Endothelial cell of umbilical vein (primary cell): ENCODE measurements at regions of chrX and their contacts with region 1.

Region 1: DNA sequence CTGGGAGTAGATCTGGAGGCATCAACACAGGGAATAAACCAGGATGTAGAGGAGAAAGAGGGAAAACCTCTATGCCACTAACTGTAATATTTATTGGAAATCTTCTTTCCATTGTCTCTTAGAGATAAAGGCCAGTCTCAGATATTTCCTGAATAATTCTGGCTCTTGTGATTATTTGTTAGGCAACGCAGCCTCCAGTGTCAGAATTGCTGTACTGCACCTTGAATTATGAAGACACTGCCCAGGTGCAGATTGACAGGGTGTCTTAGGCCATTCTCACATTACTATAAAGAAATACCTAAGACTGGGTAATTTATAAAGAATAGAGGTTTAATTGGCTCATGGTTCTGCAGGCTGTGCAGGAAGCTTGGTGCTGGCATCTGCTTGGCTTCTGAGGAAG is 100.7 kb upstream of the ZDHHC15 start:
- DNase-seq: no peak
- H3K4me3 ChIP-seq: no peak overlapping the region
- H3K27ac ChIP-seq: no peak overlapping the region
- H3K4me1 ChIP-seq: no peaks in the 10 kb centered on the region
- H3K27me3 ChIP-seq: no peaks in the 10 kb centered on the region
- CTCF ChIP-seq: no peak
- POLR2A ChIP-seq: no peak

Region 2: DNA sequence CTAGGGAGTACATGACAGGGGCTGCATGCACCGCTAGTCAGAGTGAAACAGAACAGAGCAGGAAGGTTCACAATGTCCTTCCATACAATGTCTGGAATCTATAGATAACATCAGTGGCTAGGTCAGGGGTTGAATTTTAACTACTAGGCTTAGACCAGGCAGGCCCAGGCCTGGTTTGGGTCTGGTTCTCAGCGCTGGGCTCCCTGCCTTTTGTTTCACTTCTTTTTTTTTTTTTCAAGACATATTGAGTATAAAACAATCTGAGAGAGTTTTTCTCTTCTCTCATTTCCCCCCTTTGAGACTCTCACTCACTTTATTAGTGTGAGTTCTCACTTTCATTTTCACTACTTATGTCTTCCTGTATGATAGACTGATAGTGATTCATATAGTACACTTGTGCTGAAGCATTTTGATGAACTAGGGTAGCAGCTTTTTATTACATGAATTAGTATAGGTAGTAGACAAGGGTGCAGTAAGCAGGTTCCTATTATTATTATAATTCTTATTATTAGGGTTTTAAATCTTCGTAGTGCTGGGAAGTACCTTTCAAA is 19.4 kb after region 1 on chrX:
- CTCF ChIA-PET with region 1: no interaction called
- POLR2A ChIA-PET with region 1: no interaction called
- dilution Hi-C with region 1: no loop called
- intact Hi-C with region 1: no loop called
- DNase-seq: no peak
- H3K4me3 ChIP-seq: no peak overlapping the region
- H3K27ac ChIP-seq: no peak overlapping the region
- H3K4me1 ChIP-seq: no peaks in the 10 kb centered on the region
- H3K27me3 ChIP-seq: no peaks in the 10 kb centered on the region
- CTCF ChIP-seq: no peak
- POLR2A ChIP-seq: no peak

Region 3: GRCh38 chrX:75673468-75673867 is 49.9 kb after region 1 on chrX:
- CTCF ChIA-PET with region 1: no interaction called
- POLR2A ChIA-PET with region 1: no interaction called
- dilution Hi-C with region 1: no loop called
- intact Hi-C with region 1: no loop called
- DNase-seq: no peak
- H3K4me3 ChIP-seq: no peak overlapping the region
- H3K27ac ChIP-seq: no peak overlapping the region
- H3K4me1 ChIP-seq: no peaks in the 10 kb centered on the region
- H3K27me3 ChIP-seq: no peaks in the 10 kb centered on the region
- CTCF ChIP-seq: no peak
- POLR2A ChIP-seq: no peak

Region 4: GRCh38 chrX:76029385-76029784 is 405.9 kb after region 1 on chrX:
- CTCF ChIA-PET with region 1: no interaction called
- POLR2A ChIA-PET with region 1: no interaction called
- dilution Hi-C with region 1: no loop called
- intact Hi-C with region 1: no loop called
- DNase-seq: no peak
- H3K4me3 ChIP-seq: no peak overlapping the region
- H3K27ac ChIP-seq: no peak overlapping the region
- H3K4me1 ChIP-seq: no peaks in the 10 kb centered on the region
- H3K27me3 ChIP-seq: no peaks in the 10 kb centered on the region
- CTCF ChIP-seq: no peak
- POLR2A ChIP-seq: no peak

Region 5: DNA sequence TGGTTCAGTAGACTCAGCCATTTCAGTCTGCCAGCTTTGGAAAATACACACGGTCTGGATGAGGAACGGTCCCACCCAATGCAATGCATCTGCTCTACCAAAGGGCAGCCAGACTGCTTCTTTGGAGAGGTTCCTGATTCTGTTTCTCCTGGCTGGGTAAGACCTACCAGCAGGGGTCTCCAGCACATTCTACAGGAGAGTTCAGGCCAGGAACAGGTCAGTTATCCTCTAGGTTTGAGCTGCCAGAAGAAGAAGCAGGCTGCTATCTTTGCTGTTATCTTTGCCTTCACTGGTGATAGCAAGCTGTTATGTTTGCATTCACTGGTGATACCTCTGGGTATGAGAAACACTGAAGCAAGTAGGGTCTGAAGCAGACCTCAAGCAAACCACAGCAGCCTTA is 503.8 kb after region 1 on chrX:
- CTCF ChIA-PET with region 1: no interaction called
- POLR2A ChIA-PET with region 1: no interaction called
- dilution Hi-C with region 1: no loop called
- intact Hi-C with region 1: loop called (anchors 10 kb)
- DNase-seq: no peak
- H3K4me3 ChIP-seq: no peak overlapping the region
- H3K27ac ChIP-seq: no peak overlapping the region
- H3K4me1 ChIP-seq: no peaks in the 10 kb centered on the region
- H3K27me3 ChIP-seq: no peaks in the 10 kb centered on the region
- CTCF ChIP-seq: no peak
- POLR2A ChIP-seq: no peak